ENCODE measurements at regions of chr10 and their contacts with region 1.

Region 1: GRCh38 chr10:109914966-109915365 is 8.3 kb downstream of the XPNPEP1 start:
- DNase-seq: peak in 7 of 9 donors; percentile 37 to 71 (median 56)
- ATAC-seq: peak; percentile 93
- H3K4me3 ChIP-seq: no peak overlapping the region
- H3K4me3 Mint-ChIP-seq: peak overlapping the region; percentile 56 to 78 (median 68)
- H3K27ac ChIP-seq: no peak overlapping the region
- H3K27ac Mint-ChIP-seq: peak overlapping the region in 8 of 9 donors; percentile 40 to 88 (median 58)
- H3K4me1 ChIP-seq: peaks cover 32 to 60% of the 10 kb centered on the region in 2 donors
- H3K4me1 Mint-ChIP-seq: peaks cover 64 to 94% (median 87%) of the 10 kb centered on the region in 7 donors
- H3K27me3 ChIP-seq: no peaks in the 10 kb centered on the region
- H3K27me3 Mint-ChIP-seq: no peaks in the 10 kb centered on the region

Region 2: GRCh38 chr10:109898007-109898406 is 17.0 kb before region 1 on chr10:
- CTCF ChIA-PET with region 1: interaction called, 14 read pairs
- POLR2A ChIA-PET with region 1: interaction called, 5 read pairs
- intact Hi-C with region 1: loop called in 1 of 2 experiments (anchors 1 kb)
- DNase-seq: no peak
- ATAC-seq: no peak
- H3K4me3 ChIP-seq: no peak overlapping the region
- H3K4me3 Mint-ChIP-seq: no peak overlapping the region
- H3K27ac ChIP-seq: no peak overlapping the region
- H3K27ac Mint-ChIP-seq: no peak overlapping the region
- H3K4me1 ChIP-seq: peaks cover 7 to 8% of the 10 kb centered on the region in 2 donors
- H3K4me1 Mint-ChIP-seq: peaks cover 40 to 58% (median 50%) of the 10 kb centered on the region in 7 donors
- H3K27me3 ChIP-seq: no peaks in the 10 kb centered on the region
- H3K27me3 Mint-ChIP-seq: no peaks in the 10 kb centered on the region

Region 3: DNA sequence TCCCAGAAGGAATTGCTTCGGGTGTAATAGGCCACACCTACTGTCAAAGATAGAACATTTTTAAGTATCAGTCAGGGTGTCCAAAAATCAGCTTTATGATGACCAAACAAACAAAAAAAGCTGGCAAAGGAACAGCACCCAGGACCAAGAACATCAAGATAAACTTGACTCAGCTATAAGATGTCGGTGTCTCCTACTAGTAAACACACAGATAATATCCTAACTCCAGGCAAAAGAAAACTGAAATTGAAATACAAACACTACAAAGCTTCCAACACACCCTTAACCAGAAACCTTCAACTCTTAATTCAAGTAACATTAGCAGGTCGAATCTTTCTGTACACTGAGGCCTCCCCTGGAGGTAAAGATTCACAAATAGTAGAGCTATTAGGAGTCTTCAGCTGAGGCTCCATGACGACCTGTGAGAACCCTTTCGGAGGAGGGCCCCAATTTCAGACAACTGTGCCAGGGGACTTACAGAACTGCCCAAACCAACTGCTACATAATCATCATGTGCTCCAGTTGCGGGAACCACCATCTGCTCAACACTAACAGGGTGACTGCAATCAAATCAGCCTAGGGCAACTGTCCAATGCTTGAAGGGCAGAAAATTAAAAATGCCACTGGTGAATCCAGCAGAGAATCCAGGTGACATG is 11.9 kb before region 1 on chr10:
- CTCF ChIA-PET with region 1: interaction called, 4 read pairs
- POLR2A ChIA-PET with region 1: interaction called, 5 read pairs
- intact Hi-C with region 1: loop called in 1 of 2 experiments (anchors 1 kb)
- DNase-seq: peak in 2 of 9 donors; percentile 32 to 43
- ATAC-seq: peak; percentile 78
- H3K4me3 ChIP-seq: peak overlapping the region; percentile 5
- H3K4me3 Mint-ChIP-seq: peak overlapping the region in 9 of 10 donors; percentile 8 to 76 (median 60)
- H3K27ac ChIP-seq: no peak overlapping the region
- H3K27ac Mint-ChIP-seq: peak overlapping the region in 8 of 9 donors; percentile 79 to 93 (median 86)
- H3K4me1 ChIP-seq: peaks cover 0 to 14% of the 10 kb centered on the region in 2 donors
- H3K4me1 Mint-ChIP-seq: peaks cover 27 to 68% (median 52%) of the 10 kb centered on the region in 7 donors
- H3K27me3 ChIP-seq: no peaks in the 10 kb centered on the region
- H3K27me3 Mint-ChIP-seq: no peaks in the 10 kb centered on the region